CD14-positive monocyte (primary cell): ENCODE measurements at regions of chr10 and their contacts with region 1.

Region 1: GRCh38 chr10:31603235-31604087 is 284.4 kb downstream of the ZEB1 start:
- DNase-seq: peak; percentile 87 to 93 (median 88)
- H3K4me3 ChIP-seq: peak overlapping the region; percentile 61 to 85 (median 67)
- H3K4me3 Mint-ChIP-seq: peak overlapping the region; percentile 86 to 92
- H3K27ac ChIP-seq: peak overlapping the region; percentile 12 to 76
- H3K27ac Mint-ChIP-seq: peak overlapping the region in 6 of 7 donors; percentile 74 to 89 (median 78)
- H3K4me1 ChIP-seq: peaks cover 21 to 35% of the 10 kb centered on the region in 2 donors
- H3K4me1 Mint-ChIP-seq: peaks cover 32% of the 10 kb centered on the region
- H3K27me3 ChIP-seq: no peaks in the 10 kb centered on the region
- H3K27me3 Mint-ChIP-seq: peaks cover 0 to 2% (median 0%) of the 10 kb centered on the region in 3 donors
- CTCF ChIP-seq: no peak

Region 2: DNA sequence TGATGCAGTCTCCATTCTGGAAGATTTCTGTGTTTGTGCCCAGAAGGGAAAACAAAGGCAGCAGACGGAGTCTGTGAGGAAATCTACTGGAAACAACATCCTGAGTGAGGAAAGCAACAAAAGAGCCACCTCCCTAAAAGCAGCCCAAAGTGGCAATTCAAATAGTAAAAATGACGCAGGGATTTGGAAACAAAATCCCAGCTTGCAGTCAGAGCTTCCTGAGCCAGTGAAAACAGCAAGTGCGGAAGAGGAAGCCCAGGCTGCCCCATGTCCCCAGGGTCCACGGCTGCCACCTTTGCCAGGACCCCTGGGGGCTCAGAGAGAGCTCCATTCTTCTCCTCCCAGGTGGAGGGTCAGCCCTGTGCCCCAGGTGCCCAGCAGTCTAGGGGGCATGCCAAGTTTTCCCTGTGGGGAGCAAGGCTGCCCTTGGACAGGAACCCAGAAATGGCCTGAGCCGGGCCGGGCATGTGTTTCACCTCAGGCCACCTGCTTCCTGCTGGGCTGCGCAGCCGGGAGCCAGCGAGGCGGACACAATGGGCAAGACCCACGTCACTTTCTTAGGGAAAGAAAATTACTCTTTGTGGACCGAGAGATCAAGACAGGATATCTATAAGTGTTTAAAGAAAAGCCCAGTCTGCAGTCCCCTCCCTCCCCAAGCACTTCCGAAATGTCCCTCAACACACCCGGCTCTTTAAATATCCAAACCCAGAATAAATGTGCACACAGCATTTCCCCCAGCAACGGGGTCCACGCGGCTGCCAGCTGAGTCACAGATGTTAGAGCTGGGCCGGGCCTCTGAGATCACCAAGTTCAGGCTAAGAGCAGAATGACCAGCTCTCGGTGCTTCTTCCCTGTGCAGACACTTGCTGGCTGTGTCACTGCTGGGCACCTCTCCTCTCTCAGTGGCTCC is 94.1 kb after region 1 on chr10:
- intact Hi-C with region 1: loop called (anchors 10 kb)
- DNase-seq: peak; percentile 81 to 86 (median 82)
- H3K4me3 ChIP-seq: peak overlapping the region in 1 of 3 experiments; percentile 59
- H3K4me3 Mint-ChIP-seq: peak overlapping the region; percentile 63 to 77
- H3K27ac ChIP-seq: peak overlapping the region; percentile 43 to 72
- H3K27ac Mint-ChIP-seq: peak overlapping the region; percentile 51 to 91 (median 83)
- H3K4me1 ChIP-seq: peaks cover 53 to 61% of the 10 kb centered on the region in 2 donors
- H3K4me1 Mint-ChIP-seq: peaks cover 65% of the 10 kb centered on the region
- H3K27me3 ChIP-seq: no peaks in the 10 kb centered on the region
- H3K27me3 Mint-ChIP-seq: no peaks in the 10 kb centered on the region
- CTCF ChIP-seq: no peak

Region 3: DNA sequence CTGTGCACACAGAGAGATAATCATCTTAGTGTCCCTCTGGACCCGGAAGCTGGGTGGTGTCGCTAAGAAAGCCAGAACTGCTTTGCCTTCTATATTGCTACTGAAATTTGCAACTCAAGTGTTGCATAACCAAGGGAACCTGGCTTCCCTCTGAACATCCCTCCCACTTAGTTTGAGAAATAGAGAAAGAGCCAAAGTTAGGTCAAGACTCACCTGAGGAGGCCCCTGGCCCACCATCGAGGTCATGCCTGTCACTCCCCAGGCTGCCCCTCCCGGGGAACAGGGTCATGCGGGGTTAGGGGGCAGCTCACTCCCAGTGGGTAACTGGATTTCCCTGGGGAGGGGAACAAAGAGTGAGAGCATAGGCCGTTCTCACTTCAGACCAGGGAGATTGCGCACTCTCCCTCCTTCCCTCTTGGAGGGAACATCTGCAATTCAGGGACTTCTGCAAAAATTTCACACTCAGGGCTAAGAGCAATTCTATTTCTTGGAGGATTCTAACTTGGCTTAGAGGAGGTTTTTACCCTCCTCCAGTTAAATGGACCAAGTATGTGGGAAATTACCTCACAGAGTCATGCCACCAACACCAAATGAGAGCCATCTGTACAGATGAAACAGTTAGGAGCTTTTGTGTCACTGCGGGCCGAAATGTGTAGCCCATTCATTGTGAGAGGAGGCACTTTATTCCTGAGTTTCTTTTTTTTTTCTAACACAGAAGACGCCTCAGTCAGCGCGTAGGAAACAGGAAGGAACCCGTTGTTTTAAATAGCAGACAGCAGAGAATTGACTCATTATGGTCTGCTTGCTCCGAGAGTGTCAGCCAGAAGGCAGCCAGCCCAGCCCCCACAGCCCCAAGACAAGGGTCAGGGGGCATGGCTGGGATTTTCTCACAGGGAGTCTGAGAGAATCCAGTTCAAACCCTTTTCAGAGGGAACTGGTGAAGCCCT is 103.9 kb after region 1 on chr10:
- intact Hi-C with region 1: loop called in 1 of 2 experiments (anchors 10 kb)
- DNase-seq: peak; percentile 81 to 90 (median 86)
- H3K4me3 ChIP-seq: peak overlapping the region; percentile 17 to 72 (median 38)
- H3K4me3 Mint-ChIP-seq: peak overlapping the region; percentile 76 to 93
- H3K27ac ChIP-seq: peak overlapping the region; percentile 88 to 94
- H3K27ac Mint-ChIP-seq: peak overlapping the region; percentile 95 to 99 (median 98)
- H3K4me1 ChIP-seq: peaks cover 63 to 76% of the 10 kb centered on the region in 2 donors
- H3K4me1 Mint-ChIP-seq: peaks cover 71% of the 10 kb centered on the region
- H3K27me3 ChIP-seq: no peaks in the 10 kb centered on the region
- H3K27me3 Mint-ChIP-seq: peaks cover 0 to 2% (median 0%) of the 10 kb centered on the region in 3 donors
- CTCF ChIP-seq: no peak